ENCODE measurements at regions of chr9 and their contacts with region 1.

Region 1: DNA sequence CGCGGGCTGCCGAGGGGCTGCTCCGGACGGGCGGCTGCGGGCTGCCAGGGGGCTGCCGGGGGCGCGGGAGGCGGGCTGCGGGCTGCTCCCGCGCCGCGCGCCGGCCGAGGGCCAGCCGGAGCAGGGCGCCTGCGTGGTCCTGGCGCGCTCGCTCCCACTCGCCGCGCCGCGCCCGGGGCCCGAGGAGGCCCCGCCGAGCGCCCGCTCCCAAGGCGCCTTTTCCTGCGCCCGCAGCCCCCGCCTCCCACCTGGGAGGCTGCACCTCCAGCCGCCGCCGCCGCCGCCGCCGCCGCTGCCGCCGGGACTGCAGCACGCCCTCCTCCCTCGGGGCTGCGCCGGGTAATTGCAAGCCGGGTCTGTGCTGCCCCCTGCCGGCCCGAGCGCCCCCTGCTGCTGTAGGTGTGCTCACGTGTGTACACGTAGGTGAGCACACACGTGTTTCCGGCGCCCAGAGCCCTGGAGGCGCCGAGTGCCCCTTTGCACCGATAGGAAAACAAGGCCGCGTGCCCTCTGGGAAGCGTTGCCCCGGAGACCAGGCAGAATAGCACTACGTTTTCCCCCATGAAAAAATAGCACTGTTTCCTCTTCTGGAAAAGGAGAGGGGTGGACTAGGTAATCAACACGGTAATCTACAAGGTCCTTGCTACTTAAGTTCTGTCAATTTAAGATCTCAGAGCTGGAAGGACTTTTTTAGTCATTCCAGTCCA is at the start of gene EPB41L4B:
- DNase-seq: peak; percentile 88
- H3K4me3 Mint-ChIP-seq: peak within 1 kb of the TSS; percentile 84
- H3K27ac Mint-ChIP-seq: peak within 1 kb of the TSS; percentile 67
- H3K4me1 Mint-ChIP-seq: peaks cover 41% of the 10 kb centered on the region
- H3K27me3 Mint-ChIP-seq: no peaks in the 10 kb centered on the region
- CTCF ChIP-seq: peak; percentile 96
- total RNA-seq, gene EPB41L4B: 20.2 and 23.7 TPM in 2 replicates

Region 2: DNA sequence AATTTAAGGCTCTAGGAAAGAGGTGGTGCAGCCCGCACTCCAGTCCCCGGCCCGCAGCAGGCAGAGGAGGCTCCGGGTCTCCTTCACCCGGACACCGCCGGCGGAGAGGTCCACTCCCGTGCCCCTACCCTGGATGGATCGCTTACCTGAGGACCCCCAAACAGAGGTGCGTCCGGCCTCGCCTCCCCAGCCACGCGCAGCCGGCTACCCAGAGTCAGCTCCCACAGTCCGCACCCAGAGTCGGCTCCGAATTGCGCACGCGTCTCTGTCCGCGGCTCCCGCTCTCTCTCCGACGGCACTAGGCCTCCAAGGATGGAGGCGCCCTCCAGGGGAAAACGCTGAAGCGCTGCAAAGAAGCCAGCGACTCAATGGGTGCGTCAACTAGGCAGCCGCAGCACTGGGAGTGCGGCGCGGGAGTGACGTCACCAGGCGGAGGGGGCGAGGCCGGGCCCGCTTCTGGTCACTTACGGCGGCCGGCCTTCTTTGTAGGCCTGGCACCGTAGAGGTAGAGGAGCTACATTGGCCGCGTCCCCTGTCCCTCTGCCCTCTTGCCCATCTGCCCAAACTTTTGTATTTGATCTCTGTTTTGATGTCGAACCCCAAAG is 387.1 kb before region 1 on chr9 and contains the start of gene ELP1:
- CTCF ChIA-PET with region 1: interaction called, 3 read pairs
- POLR2A ChIA-PET with region 1: no interaction called
- intact Hi-C with region 1: loop called (anchors 2 kb)
- DNase-seq: peak; percentile 94
- H3K4me3 Mint-ChIP-seq: peak within 1 kb of the TSS; percentile 98
- H3K27ac Mint-ChIP-seq: peak within 1 kb of the TSS; percentile 93
- H3K4me1 Mint-ChIP-seq: peaks cover 24% of the 10 kb centered on the region
- H3K27me3 Mint-ChIP-seq: no peaks in the 10 kb centered on the region
- CTCF ChIP-seq: peak; percentile 6
- total RNA-seq, gene ELP1: 36.9 and 39.6 TPM in 2 replicates

Region 3: GRCh38 chr9:109119439-109120203 is 201.3 kb before region 1 on chr9 and contains the start of gene TMEM245:
- CTCF ChIA-PET with region 1: interaction called, 7 read pairs
- POLR2A ChIA-PET with region 1: interaction called, 44 read pairs
- intact Hi-C with region 1: loop called (anchors 5 kb)
- DNase-seq: peak; percentile 99
- H3K4me3 Mint-ChIP-seq: peak within 1 kb of the TSS; percentile 86
- H3K27ac Mint-ChIP-seq: peak within 1 kb of the TSS; percentile 73
- H3K4me1 Mint-ChIP-seq: peaks cover 22% of the 10 kb centered on the region
- H3K27me3 Mint-ChIP-seq: no peaks in the 10 kb centered on the region
- CTCF ChIP-seq: no peak
- total RNA-seq, gene TMEM245: 35.0 and 43.8 TPM in 2 replicates

Region 4: DNA sequence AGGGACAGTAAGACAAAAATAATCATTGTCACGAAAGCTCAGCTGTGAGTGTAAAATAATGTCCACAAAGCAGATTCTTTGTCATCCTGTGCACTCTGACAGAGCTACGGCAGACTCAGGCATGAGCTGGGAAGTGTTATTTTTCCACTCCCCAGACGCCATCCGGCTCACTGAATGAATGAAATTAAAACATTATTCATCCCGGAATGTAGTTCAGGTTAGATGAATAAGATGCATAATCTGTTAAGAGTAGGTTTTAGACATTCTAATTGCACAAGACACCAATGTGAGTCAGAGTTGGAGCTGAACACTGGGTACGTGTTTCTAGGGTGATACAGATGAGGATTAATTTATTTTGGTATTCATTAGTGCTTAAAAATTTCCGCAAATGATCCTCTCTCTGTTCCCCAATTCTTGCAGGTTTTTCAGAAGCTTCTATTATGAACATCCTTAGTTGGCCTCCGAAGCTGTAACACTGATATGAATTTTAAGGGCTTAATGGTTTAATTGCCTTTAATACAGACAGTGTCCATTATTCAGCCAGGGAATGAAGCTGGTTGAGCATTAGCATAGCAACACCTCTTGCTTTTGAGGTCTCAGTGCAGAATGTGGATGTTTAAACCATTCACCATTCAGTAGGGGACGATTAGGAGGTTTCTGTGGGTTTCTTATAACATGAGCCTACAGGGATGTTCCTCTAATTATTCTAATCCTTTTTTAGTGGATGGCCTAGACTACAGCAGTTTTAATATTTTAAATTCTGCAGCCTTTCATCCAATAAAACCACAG is 88.3 kb before region 1 on chr9:
- CTCF ChIA-PET with region 1: interaction called, 4 read pairs
- POLR2A ChIA-PET with region 1: interaction called, 30 read pairs
- intact Hi-C with region 1: no loop called
- DNase-seq: peak; percentile 83
- H3K4me3 Mint-ChIP-seq: peak overlapping the region; percentile 18
- H3K27ac Mint-ChIP-seq: peak overlapping the region; percentile 71
- H3K4me1 Mint-ChIP-seq: peaks cover 19% of the 10 kb centered on the region
- H3K27me3 Mint-ChIP-seq: no peaks in the 10 kb centered on the region
- CTCF ChIP-seq: no peak

Region 5: DNA sequence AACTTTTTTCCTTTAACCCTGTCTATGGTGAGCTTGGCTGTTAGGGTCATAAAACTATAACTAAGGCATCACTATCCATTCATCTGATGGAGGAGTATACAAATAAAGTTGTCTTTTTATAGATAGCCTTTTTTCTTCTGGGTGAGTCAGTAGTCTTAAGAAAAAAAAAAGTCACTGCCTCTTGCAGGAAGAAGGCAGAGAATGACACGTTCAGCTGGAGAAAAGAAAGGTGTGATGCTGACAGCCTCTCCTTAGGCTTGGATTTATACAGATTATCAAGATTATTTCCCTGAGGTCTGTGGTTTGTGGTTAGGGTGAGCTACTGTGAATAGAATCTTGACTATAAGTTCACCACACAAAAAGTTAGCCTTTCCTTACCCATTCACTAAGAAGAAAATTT is 23.0 kb before region 1 on chr9:
- CTCF ChIA-PET with region 1: interaction called, 5 read pairs
- POLR2A ChIA-PET with region 1: interaction called, 8 read pairs
- intact Hi-C with region 1: loop called (anchors 1 kb)
- DNase-seq: peak; percentile 67
- H3K4me3 Mint-ChIP-seq: no peak overlapping the region
- H3K27ac Mint-ChIP-seq: peak overlapping the region; percentile 39
- H3K4me1 Mint-ChIP-seq: peaks cover 11% of the 10 kb centered on the region
- H3K27me3 Mint-ChIP-seq: no peaks in the 10 kb centered on the region
- CTCF ChIP-seq: no peak

Region 6: GRCh38 chr9:109469646-109470358 is 148.9 kb after region 1 on chr9:
- CTCF ChIA-PET with region 1: interaction called, 10 read pairs
- POLR2A ChIA-PET with region 1: interaction called, 4 read pairs
- intact Hi-C with region 1: loop called (anchors 5 kb)
- DNase-seq: peak; percentile 88
- H3K4me3 Mint-ChIP-seq: no peak overlapping the region
- H3K27ac Mint-ChIP-seq: peak overlapping the region; percentile 67
- H3K4me1 Mint-ChIP-seq: peaks cover 49% of the 10 kb centered on the region
- H3K27me3 Mint-ChIP-seq: no peaks in the 10 kb centered on the region
- CTCF ChIP-seq: peak; percentile 91

Region 7: DNA sequence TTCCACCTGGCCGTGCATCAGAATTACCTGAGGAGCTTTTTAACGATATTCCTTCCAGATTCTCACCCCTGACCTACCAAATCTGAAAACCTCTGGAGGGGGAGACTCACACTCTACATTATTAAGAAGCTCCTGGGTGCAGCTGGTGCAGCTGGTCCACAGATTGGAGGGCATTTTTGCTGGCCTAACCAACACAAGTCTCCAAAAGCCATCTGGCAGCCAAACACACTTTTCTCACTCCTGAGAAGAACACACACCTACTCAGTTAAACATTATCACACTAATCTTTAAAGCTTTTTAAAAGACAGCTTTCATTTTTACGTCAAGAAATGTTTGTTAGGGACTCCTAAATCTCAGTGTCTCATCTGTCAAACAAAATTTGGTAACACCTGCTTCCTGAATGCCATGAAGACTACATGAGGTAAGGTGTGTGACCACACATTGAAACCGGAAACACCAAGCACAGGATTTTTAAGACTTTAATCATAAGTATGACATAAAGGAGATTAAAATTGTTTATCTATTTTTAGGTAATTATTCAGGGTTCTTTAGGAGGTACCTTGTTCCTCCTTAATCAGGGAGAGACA is 191.4 kb after region 1 on chr9:
- CTCF ChIA-PET with region 1: no interaction called
- POLR2A ChIA-PET with region 1: no interaction called
- intact Hi-C with region 1: no loop called
- DNase-seq: no peak
- H3K4me3 Mint-ChIP-seq: no peak overlapping the region
- H3K27ac Mint-ChIP-seq: no peak overlapping the region
- H3K4me1 Mint-ChIP-seq: peaks cover 9% of the 10 kb centered on the region
- H3K27me3 Mint-ChIP-seq: no peaks in the 10 kb centered on the region
- CTCF ChIP-seq: no peak

Measured in MCF 10A (cell line).